GM12878 (cell line): ENCODE measurements at regions of chr15 and their contacts with region 1.

Region 1: GRCh38 chr15:52179278-52180195 is 11.7 kb downstream of the GNB5 start:
- DNase-seq: peak; percentile 37
- ATAC-seq: peak; percentile 87
- H3K4me3 ChIP-seq: peak overlapping the region; percentile 92
- H3K27ac ChIP-seq: peak overlapping the region; percentile 76
- H3K4me1 ChIP-seq: peaks cover 12% of the 10 kb centered on the region
- H3K27me3 ChIP-seq: no peaks in the 10 kb centered on the region
- CTCF ChIP-seq: no peak
- EP300 ChIP-seq: no peak
- POLR2A ChIP-seq: peak; percentile 89
- RAD21 ChIP-seq: no peak

Region 2: DNA sequence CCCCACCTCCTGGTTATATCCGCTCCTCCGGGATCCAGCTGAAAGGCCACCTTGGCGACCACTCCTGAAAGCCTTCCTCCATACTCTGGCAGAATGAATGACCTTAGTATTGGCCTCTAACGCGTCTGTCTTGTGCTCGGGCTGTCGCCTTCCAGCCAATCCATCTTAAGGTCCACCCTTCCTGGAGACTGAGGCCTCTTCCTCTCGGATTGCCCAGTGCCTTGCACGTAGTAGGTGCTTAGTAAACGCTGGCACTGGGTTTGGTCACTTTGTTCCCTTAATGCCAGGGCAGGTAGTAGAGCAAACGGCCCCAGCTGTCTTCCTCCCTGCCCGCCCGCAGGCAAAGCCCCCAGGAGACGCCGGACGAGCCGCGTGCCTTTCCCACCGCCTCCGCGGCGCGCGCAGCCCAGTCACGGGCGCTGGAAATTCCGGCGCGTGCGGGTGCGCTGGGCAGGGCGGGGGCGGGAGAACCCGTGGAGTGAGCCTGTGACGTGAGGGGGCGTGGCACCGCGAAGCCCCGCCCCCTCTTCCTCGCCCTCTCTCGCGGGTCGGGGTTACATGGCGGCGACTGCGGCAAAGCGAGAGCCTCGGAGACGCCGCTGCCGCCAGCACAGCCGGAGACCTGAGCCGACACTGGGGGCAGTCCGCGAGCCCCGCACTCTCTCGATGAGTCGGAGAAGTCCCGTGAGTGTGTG is 160.7 kb before region 1 on chr15 and contains the start of gene MAPK6:
- CTCF ChIA-PET with region 1: no interaction called
- POLR2A ChIA-PET with region 1: no interaction called
- RAD21 ChIA-PET with region 1: no interaction called
- SMC1A ChIA-PET with region 1: no interaction called
- in situ Hi-C with region 1: no loop called
- intact Hi-C with region 1: no loop called
- DNase-seq: peak; percentile 71
- ATAC-seq: peak; percentile 69
- H3K4me3 ChIP-seq: peak within 1 kb of the TSS; percentile 91
- H3K27ac ChIP-seq: peak within 1 kb of the TSS; percentile 99
- H3K4me1 ChIP-seq: peaks cover 15% of the 10 kb centered on the region
- H3K27me3 ChIP-seq: no peaks in the 10 kb centered on the region
- CTCF ChIP-seq: no peak
- EP300 ChIP-seq: peak in 1 of 2 experiments; percentile 61; a peak in 1 of 4 replicates
- POLR2A ChIP-seq: peak; percentile 88
- RAD21 ChIP-seq: no peak
- polyA plus RNA-seq, gene MAPK6: 20.6 to 23.4 TPM

Region 3: GRCh38 chr15:52163321-52164190 is 16.0 kb before region 1 on chr15:
- CTCF ChIA-PET with region 1: interaction called, 12 read pairs
- POLR2A ChIA-PET with region 1: interaction called, 3 read pairs
- RAD21 ChIA-PET with region 1: interaction called, 4 read pairs
- SMC1A ChIA-PET with region 1: interaction called, 11 read pairs
- in situ Hi-C with region 1: no loop called
- intact Hi-C with region 1: no loop called
- DNase-seq: no peak
- ATAC-seq: peak; percentile 71
- H3K4me3 ChIP-seq: no peak overlapping the region
- H3K27ac ChIP-seq: no peak overlapping the region
- H3K4me1 ChIP-seq: no peaks in the 10 kb centered on the region
- H3K27me3 ChIP-seq: no peaks in the 10 kb centered on the region
- CTCF ChIP-seq: peak; percentile 15 to 43 (median 32); a peak in 4 of 6 replicates
- EP300 ChIP-seq: no peak
- POLR2A ChIP-seq: no peak
- RAD21 ChIP-seq: 0 out of 2 replicates have a peak, but pooled peaks have one; percentile 14

Region 4: GRCh38 chr15:52193791-52194190 is 14.3 kb after region 1 on chr15:
- CTCF ChIA-PET with region 1: interaction called, 23 read pairs
- POLR2A ChIA-PET with region 1: interaction called, 5 read pairs
- RAD21 ChIA-PET with region 1: interaction called, 5 read pairs
- SMC1A ChIA-PET with region 1: interaction called, 8 read pairs
- in situ Hi-C with region 1: no loop called
- intact Hi-C with region 1: no loop called
- DNase-seq: no peak
- ATAC-seq: no peak
- H3K4me3 ChIP-seq: no peak overlapping the region
- H3K27ac ChIP-seq: no peak overlapping the region
- H3K4me1 ChIP-seq: peaks cover 3% of the 10 kb centered on the region; the same call in 1 of the 2 replicates
- H3K27me3 ChIP-seq: no peaks in the 10 kb centered on the region
- CTCF ChIP-seq: no peak
- EP300 ChIP-seq: no peak
- POLR2A ChIP-seq: no peak
- RAD21 ChIP-seq: no peak

Region 5: GRCh38 chr15:52208306-52208946 is 28.9 kb after region 1 on chr15:
- CTCF ChIA-PET with region 1: interaction called, 52 read pairs
- POLR2A ChIA-PET with region 1: no interaction called
- RAD21 ChIA-PET with region 1: interaction called, 20 read pairs
- SMC1A ChIA-PET with region 1: interaction called, 15 read pairs
- in situ Hi-C with region 1: no loop called
- intact Hi-C with region 1: loop called (anchors 1 kb)
- DNase-seq: no peak
- ATAC-seq: peak; percentile 99
- H3K4me3 ChIP-seq: no peak overlapping the region
- H3K27ac ChIP-seq: no peak overlapping the region
- H3K4me1 ChIP-seq: no peaks in the 10 kb centered on the region
- H3K27me3 ChIP-seq: no peaks in the 10 kb centered on the region
- CTCF ChIP-seq: peak; percentile 84 to 89 (median 88)
- EP300 ChIP-seq: no peak
- POLR2A ChIP-seq: no peak
- RAD21 ChIP-seq: peak; percentile 71

Region 6: DNA sequence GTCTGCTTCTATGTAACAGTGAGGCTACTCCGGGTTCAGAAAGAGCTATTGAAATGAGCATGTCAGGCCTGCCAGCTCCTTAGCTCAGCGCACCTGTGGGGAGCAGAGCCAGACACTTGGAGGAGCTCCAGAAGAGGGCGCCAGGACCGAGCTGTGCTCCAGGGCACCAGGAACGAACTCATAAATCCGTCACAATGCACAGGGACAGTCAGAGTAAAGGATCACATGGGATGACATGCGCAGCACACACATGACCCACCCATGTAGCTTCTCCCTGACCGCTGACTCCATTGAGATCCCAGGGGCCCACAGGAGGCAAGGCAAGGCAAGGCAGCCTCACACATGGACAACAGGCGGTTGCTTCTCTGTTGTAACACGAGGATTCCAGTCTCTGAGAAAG is 37.6 kb after region 1 on chr15:
- CTCF ChIA-PET with region 1: interaction called, 235 read pairs
- POLR2A ChIA-PET with region 1: no interaction called
- RAD21 ChIA-PET with region 1: interaction called, 13 read pairs
- SMC1A ChIA-PET with region 1: interaction called, 17 read pairs
- in situ Hi-C with region 1: no loop called
- intact Hi-C with region 1: no loop called
- DNase-seq: no peak
- ATAC-seq: peak; percentile 74
- H3K4me3 ChIP-seq: no peak overlapping the region
- H3K27ac ChIP-seq: no peak overlapping the region
- H3K4me1 ChIP-seq: peaks cover 15% of the 10 kb centered on the region
- H3K27me3 ChIP-seq: no peaks in the 10 kb centered on the region
- CTCF ChIP-seq: peak; percentile 57 to 73 (median 58)
- EP300 ChIP-seq: no peak
- POLR2A ChIP-seq: no peak
- RAD21 ChIP-seq: peak; percentile 43; the same call in 1 of the 2 replicates